Aorta (tissue), 5 donors: ENCODE measurements at regions of chr11 and their contacts with region 1.

Region 1: DNA sequence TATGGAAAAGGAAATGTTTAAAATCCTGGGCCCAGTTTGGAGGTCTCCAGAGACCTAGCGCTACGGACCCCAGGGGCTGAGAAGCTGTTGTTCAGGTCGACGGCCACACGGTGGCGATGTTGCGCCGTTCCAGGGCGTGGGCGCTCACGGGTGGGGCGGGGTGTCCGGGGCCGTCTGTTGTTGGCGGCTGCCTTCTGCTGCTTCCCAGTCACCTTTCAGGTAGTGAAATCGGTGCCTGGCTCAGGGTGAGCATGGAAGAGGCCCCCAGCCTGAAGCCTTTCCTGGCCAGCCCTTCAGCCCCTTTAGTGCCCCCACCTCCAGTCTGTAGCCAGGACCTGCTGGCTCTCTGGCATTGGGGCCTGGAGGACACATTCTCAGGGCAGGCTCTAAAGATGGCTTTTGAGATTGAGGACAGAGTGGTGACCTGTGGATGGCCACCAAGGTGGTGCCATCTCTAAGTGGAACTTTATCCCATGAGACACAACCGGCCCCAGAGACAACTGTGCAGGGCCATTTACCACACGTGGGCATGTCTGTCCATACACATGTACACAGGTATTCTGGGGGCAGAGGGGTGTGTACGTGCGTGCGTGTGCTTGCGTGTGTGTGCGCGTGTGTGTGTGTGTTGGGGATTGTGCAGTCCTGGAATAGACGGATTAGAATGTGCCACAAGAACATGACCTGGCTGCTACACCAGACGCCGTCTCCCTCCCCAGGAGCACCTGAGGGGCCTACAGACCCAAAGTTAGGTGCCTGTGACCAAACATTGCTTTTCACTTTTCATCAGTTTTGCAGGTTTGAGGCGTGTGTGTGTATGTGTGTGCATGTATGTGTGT is 53.8 kb downstream of the ST14 start:
- DNase-seq: peak in 1 of 2 donors; percentile 91
- ATAC-seq: peak; percentile 77
- H3K4me3 ChIP-seq: no peak overlapping the region
- H3K27ac ChIP-seq: no peak overlapping the region
- H3K4me1 ChIP-seq: no peaks in the 10 kb centered on the region
- H3K27me3 ChIP-seq: no peaks in the 10 kb centered on the region

Region 2: GRCh38 chr11:130390071-130390758 is 176.9 kb after region 1 on chr11:
- intact Hi-C with region 1: loop called (anchors 5 to 10 kb)
- DNase-seq: peak in 1 of 2 donors; percentile 36
- ATAC-seq: no peak
- H3K4me3 ChIP-seq: no peak overlapping the region
- H3K27ac ChIP-seq: no peak overlapping the region
- H3K4me1 ChIP-seq: no peaks in the 10 kb centered on the region
- H3K27me3 ChIP-seq: no peaks in the 10 kb centered on the region